Gastrocnemius medialis (tissue), 4 donors: ENCODE measurements at regions of chr1 and their contacts with region 1.

Region 1: DNA sequence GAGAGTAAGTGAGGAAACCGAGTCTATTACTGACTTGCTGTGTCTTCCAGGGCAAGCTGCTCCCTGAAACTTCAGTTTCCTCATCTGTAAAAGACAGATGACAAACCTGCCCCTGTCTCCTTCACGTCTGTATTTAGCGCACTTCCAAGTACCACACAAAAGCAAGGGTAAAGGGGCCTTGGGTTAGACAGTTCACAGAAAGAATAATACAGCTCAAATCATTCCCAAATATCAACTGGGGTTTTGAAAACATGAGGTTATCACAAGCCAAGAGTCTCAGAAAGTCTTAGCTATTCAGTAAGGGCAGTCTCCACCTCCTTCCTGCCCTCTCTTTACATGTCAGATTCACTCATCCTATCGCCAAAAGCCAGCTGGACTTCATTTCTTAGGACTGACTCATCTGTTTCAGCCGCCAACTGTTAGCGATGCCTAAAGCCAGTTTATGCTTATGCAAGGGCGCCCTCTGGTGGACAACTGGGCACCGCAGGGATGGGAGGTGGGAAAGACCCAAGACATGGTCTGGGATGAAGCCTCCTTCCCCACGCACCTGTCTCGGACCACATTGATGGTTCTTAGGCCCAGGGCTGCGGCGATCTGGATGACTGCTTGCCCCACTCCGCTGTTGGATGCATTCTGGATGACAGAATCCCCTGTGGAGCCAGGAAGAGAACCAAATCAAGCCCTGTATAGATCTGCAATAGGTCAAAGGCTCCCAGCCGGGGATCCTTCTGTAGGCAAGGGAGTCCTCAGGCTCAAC is 21.1 kb upstream of the SRSF4 start:
- DNase-seq: peak; percentile 88 to 92
- ATAC-seq: peak; percentile 98 to 100
- H3K4me3 ChIP-seq: no peak overlapping the region
- H3K27ac ChIP-seq: peak overlapping the region; percentile 35 to 70 (median 69)
- H3K4me1 ChIP-seq: peaks cover 6 to 7% of the 10 kb centered on the region in 2 donors
- H3K27me3 ChIP-seq: no peaks in the 10 kb centered on the region
- CTCF ChIP-seq: peak; percentile 85 to 97 (median 94)
- POLR2A ChIP-seq: no peak

Region 2: GRCh38 chr1:28775121-28775944 is 427.4 kb before region 1 on chr1:
- in situ Hi-C with region 1: loop called in 2 of 4 experiments (anchors 10 kb)
- intact Hi-C with region 1: no loop called
- DNase-seq: peak; percentile 23 to 51
- ATAC-seq: peak in 1 of 2 donors; percentile 71
- H3K4me3 ChIP-seq: peak overlapping the region in 3 of 4 donors; percentile 32 to 44 (median 40)
- H3K27ac ChIP-seq: no peak overlapping the region
- H3K4me1 ChIP-seq: no peaks in the 10 kb centered on the region
- H3K27me3 ChIP-seq: no peaks in the 10 kb centered on the region
- CTCF ChIP-seq: no peak
- POLR2A ChIP-seq: no peak

Region 3: GRCh38 chr1:29033829-29034466 is 168.8 kb before region 1 on chr1:
- in situ Hi-C with region 1: no loop called
- intact Hi-C with region 1: loop called (anchors 1 kb)
- DNase-seq: no peak
- ATAC-seq: peak; percentile 45 to 51
- H3K4me3 ChIP-seq: no peak overlapping the region
- H3K27ac ChIP-seq: no peak overlapping the region
- H3K4me1 ChIP-seq: no peaks in the 10 kb centered on the region
- H3K27me3 ChIP-seq: no peaks in the 10 kb centered on the region
- CTCF ChIP-seq: peak; percentile 64 to 87 (median 76)
- POLR2A ChIP-seq: no peak

Region 4: DNA sequence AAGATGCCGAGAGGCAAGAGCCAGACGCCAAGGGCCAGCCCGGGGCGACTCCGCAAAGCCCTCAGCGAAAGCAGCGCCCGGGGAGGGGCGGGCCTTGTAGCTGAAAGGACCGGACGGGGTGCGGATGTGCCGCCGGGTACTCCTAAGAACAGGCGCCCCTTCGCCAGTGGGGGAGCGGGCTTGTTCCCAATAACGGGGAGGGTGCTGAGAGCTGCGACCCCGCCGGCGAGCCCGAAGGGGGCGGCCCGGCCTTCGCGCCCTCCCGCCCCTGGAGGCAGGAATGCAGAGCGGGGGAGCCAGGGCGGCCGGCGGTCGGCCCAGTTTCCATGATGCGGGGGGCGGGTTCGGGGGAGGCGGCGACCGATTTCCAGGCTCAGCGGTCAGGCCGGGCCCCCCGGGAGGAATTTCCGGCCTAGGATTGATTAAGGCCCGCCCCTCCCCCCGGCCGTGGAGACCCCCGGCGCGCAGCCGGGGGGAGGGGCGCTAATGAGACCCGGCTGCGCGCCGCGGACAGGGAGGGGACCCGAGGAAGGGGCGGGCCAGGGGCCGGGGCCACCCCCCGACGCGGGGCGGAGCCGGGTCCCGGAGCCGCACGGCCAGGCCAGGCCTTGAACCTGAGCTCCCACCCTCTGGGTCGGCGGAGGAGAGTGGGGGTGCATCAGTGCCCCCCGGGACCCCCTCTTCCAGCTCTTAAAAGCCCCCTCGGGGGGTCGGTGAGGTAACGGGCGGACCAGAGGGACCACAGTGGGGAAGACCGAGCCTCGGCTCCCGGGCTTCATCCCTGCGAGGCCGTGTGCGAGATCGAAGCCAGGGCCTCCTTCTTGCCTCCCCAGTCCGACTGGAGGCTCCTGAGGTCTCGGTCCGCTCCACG is 78.2 kb before region 1 on chr1:
- in situ Hi-C with region 1: no loop called
- intact Hi-C with region 1: loop called (anchors 5 kb)
- DNase-seq: peak; percentile 22 to 33
- ATAC-seq: peak; percentile 56 to 62
- H3K4me3 ChIP-seq: peak overlapping the region; percentile 55 to 80 (median 62)
- H3K27ac ChIP-seq: peak overlapping the region; percentile 71 to 82 (median 78)
- H3K4me1 ChIP-seq: peaks cover 0 to 22% of the 10 kb centered on the region in 2 donors
- H3K27me3 ChIP-seq: peaks cover 30 to 46% (median 33%) of the 10 kb centered on the region in 3 donors
- CTCF ChIP-seq: peak; percentile 59 to 85 (median 77)
- POLR2A ChIP-seq: peak; percentile 44 to 55

Region 5: DNA sequence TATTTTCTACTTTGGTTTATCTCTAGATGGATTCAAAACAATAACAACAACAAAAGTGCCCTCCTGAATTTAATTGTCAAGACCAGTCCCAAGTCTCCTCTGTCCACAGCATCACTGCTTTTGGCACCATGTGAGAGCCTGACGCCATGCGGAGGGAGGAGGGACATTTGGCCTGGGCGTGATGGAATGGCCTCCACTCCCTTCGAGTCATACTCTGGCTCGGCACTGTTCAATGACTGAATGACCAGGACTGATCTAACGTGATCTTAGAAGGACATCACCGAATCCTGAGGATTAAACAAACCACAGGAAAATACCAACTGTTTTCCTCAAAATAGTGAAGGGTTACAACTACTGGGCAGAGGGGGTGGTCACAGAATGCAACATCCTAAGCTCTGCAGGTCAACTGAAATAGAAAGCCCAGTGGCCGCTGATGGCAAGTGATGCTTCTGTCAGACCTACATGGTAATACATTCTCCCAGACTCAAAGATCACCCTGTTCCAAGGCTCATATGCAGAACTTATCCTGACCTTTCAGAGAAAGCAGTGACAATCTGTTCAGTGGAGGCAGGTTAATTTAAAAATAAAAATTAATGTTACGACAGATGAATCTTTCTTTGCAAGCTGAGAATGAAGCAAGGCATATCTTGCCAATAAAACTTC is 40.2 kb before region 1 on chr1:
- in situ Hi-C with region 1: no loop called
- intact Hi-C with region 1: loop called (anchors 5 kb)
- DNase-seq: peak in 1 of 2 donors; percentile 38
- ATAC-seq: peak; percentile 63 to 72
- H3K4me3 ChIP-seq: no peak overlapping the region
- H3K27ac ChIP-seq: peak overlapping the region; percentile 3 to 47 (median 15)
- H3K4me1 ChIP-seq: peaks cover 40 to 49% of the 10 kb centered on the region in 2 donors
- H3K27me3 ChIP-seq: no peaks in the 10 kb centered on the region
- CTCF ChIP-seq: no peak
- POLR2A ChIP-seq: no peak

Region 6: GRCh38 chr1:29181413-29182225 is 21.1 kb before region 1 on chr1 and contains the start of gene SRSF4:
- in situ Hi-C with region 1: no loop called
- intact Hi-C with region 1: loop called (anchors 1 kb)
- DNase-seq: peak; percentile 99
- ATAC-seq: peak; percentile 90 to 92
- H3K4me3 ChIP-seq: peak within 1 kb of the TSS; percentile 78 to 98 (median 82)
- H3K27ac ChIP-seq: peak within 1 kb of the TSS; percentile 94 to 100 (median 97)
- H3K4me1 ChIP-seq: peaks cover 40 to 48% of the 10 kb centered on the region in 2 donors
- H3K27me3 ChIP-seq: no peaks in the 10 kb centered on the region
- CTCF ChIP-seq: peak; percentile 57 to 81 (median 74)
- POLR2A ChIP-seq: peak; percentile 95 to 98
- total RNA-seq, gene SRSF4: 42.4 to 72.5 (median 65.4) TPM

Region 7: DNA sequence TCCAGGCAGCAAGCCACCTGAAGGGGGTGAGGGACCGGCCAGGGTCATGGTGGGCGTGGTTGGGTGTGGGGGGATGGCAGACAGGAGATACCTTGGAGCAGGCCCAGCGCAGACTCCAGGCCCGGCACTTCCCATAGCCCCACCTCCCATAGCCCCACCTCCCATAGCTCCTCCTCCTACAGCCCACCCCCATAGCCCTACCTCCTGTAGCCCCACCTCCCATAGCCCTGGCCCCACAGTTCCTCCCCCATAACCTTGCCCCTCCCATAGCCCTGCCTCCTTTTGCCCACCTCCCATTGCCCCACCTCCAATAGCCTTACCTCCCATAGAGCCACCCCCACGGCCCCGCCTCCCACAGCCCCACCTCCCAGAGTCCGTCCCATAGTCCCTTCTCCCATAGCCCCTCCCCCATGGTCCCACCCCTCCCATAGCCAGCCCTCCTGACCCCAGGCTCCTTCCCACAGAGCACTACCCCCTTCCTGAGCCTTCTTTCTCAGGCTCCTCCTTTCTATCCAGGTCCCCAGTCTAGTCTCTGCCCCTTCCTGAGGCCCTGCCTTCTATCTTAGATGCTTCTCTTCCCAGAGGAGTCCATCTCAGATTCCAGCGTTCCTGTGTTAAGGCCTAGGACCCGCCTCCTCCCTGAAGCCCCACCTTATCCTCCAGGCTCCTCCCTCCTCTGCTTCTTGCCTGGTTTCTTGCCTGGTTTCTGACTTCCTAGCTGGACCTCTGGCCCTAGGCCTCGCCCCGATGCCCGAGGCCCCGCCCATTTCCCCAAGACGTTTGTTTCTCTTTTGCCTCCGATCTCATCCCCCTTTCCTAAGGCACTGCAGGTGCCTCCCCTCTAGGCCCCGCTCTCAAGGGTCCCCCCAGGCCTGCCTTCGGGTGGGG is 80.4 kb after region 1 on chr1:
- in situ Hi-C with region 1: no loop called
- intact Hi-C with region 1: no loop called
- DNase-seq: no peak
- ATAC-seq: peak in 1 of 2 donors; percentile 21
- H3K4me3 ChIP-seq: no peak overlapping the region
- H3K27ac ChIP-seq: no peak overlapping the region
- H3K4me1 ChIP-seq: no peaks in the 10 kb centered on the region
- H3K27me3 ChIP-seq: no peaks in the 10 kb centered on the region
- CTCF ChIP-seq: no peak
- POLR2A ChIP-seq: no peak